Activated T-helper 1 cell treated with anti-CD3 and anti-CD28 coated beads, Interleukin-12 subunit alpha, Interleukin-12 subunit beta, Interleukin-2, Interleukin-4 antibody, amounts not matched to agents 30 ng/mL and 10 ng/mL and 1 ng/mL, durations not matched to agents 14 hours and 24 hours and 36 hours (primary cell): ENCODE measurements at regions of chr6 and their contacts with region 1.

Region 1: DNA sequence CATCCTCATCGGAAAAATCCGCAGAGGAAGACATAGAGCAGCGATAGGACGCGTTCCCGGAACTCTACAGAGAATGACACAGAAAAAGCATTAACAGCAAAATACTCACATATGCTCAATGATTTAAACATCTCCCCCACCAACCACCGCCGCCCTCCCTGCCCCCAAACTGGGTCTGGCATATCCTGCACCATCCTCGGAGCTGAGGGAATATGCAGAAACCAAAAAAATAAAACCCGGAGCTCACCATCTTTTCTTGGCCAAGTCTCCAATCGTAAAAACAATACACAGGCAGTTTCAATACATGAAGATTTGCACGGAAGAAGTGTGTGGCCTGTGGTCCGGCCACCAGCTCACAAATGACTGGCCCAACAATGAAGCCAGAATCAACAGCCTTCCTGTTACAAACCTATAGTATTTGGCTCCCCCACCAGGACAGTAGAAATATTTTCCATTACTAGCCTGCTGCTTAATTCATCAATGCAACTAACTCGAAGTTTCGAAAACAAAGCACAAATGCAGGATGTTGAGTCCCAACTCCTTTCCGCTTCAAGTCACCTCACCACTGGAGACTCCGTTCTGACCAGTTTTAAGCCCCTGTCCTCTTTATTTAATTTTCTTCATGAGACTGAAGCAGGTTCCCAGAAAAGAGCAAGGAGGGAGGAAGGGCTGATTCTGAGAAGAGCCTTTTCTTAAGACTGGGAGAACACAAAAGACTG is 103.2 kb upstream of the BEND6 start:
- DNase-seq: peak; percentile 37
- H3K4me3 Mint-ChIP-seq: peak overlapping the region; percentile 81
- H3K27ac Mint-ChIP-seq: peak overlapping the region; percentile 78
- H3K4me1 Mint-ChIP-seq: peaks cover 30% of the 10 kb centered on the region
- H3K27me3 Mint-ChIP-seq: peaks cover 24% of the 10 kb centered on the region

Region 2: DNA sequence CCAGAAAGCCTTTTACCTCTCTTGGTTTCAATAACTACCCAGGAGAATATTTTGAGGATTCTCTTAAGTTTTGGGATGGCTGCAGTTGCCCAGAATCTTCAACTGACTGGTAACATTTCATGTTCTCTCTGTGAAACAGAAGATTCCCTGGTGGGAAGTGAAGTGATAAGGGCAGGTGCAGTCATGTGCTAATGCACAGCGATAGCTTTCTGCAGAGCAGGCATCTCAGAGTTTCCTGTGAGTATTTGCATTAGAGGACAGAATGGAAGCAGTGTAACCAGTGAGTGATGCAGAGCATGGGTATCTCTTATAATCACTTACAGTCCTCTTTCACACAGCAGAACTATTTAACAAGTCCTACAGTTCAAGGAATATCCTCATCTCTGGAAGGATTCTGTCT is 1601.3 kb before region 1 on chr6:
- intact Hi-C with region 1: no loop called
- DNase-seq: no peak
- H3K4me3 Mint-ChIP-seq: no peak overlapping the region
- H3K27ac Mint-ChIP-seq: no peak overlapping the region
- H3K4me1 Mint-ChIP-seq: no peaks in the 10 kb centered on the region
- H3K27me3 Mint-ChIP-seq: no peaks in the 10 kb centered on the region

Region 3: DNA sequence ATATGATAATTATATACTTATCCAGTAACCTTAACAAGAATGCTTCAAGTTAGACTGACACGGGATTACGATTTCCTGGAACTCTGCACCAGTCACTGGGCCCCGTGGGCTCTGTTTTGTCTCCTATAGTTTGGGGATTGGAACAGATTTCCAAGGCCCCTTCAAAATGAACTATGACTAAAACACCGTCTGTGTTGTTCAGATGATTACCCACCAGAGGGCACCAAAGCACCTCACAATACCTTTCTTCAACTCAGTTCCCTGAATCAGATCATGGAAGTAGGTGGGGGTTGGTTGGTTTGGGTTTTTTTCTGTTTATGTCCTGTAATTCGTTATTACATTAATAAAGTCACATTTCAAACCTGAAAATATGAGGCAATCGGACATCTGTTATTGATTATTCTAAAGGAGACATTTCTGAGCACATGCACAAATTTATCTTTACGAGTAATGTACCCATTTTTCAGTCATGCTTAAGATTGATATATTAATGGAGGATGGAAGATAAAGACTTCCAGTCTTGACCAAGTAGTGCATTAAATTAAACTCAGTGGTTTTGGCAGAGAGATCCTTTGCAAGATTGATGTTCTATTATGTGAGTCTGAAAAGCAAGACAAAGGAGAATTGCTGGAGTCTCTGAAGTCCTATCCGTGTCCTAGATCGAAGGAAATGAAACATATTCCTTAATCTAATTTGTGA is 492.4 kb before region 1 on chr6:
- intact Hi-C with region 1: loop called (anchors 2 kb)
- DNase-seq: peak; percentile 17
- H3K4me3 Mint-ChIP-seq: no peak overlapping the region
- H3K27ac Mint-ChIP-seq: no peak overlapping the region
- H3K4me1 Mint-ChIP-seq: no peaks in the 10 kb centered on the region
- H3K27me3 Mint-ChIP-seq: peaks cover 6% of the 10 kb centered on the region

Region 4: GRCh38 chr6:56637640-56638039 is 214.1 kb before region 1 on chr6:
- intact Hi-C with region 1: loop called (anchors 1 kb)
- DNase-seq: no peak
- H3K4me3 Mint-ChIP-seq: no peak overlapping the region
- H3K27ac Mint-ChIP-seq: no peak overlapping the region
- H3K4me1 Mint-ChIP-seq: no peaks in the 10 kb centered on the region
- H3K27me3 Mint-ChIP-seq: no peaks in the 10 kb centered on the region

Region 5: DNA sequence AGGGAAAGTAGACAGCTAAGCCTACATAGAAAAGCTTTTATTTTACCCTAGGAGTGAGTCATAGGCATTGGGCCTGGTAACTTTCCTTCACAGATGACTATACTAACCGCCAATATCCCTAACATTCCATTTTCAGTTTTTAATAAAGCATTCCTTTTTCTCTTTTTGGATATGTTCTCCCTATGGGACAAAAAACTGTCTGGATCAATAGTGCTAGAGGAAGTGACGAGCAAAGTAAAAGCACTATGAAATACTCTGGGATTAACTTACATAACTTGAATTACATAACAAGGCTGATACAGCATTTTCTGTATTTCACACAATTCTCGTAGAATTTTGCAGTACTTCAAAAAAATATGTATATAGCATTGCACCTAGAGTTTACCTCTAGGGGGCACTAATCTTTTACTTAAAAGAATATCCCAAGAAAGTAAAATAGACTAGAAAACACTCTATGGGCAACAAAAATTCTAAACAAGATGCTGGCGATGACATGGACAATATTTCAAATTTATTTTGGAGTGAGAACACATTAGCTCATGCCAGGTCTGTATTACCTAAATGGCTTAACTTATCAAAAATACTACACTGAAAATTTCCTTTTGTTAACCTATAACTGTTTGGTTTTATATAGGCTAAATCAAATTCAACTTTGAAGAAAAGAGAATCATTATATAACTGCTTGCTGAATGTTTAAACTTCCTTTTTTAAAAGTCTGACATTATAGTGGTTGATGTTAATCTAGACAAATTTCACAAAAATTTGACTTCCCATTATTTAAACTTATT is 142.7 kb before region 1 on chr6:
- intact Hi-C with region 1: loop called (anchors 1 kb)
- DNase-seq: no peak
- H3K4me3 Mint-ChIP-seq: no peak overlapping the region
- H3K27ac Mint-ChIP-seq: no peak overlapping the region
- H3K4me1 Mint-ChIP-seq: no peaks in the 10 kb centered on the region
- H3K27me3 Mint-ChIP-seq: no peaks in the 10 kb centered on the region

Region 6: GRCh38 chr6:56749632-56750151 is 102.0 kb before region 1 on chr6:
- intact Hi-C with region 1: loop called (anchors 5 kb)
- DNase-seq: no peak
- H3K4me3 Mint-ChIP-seq: no peak overlapping the region
- H3K27ac Mint-ChIP-seq: peak overlapping the region; percentile 43
- H3K4me1 Mint-ChIP-seq: peaks cover 10% of the 10 kb centered on the region
- H3K27me3 Mint-ChIP-seq: peaks cover 8% of the 10 kb centered on the region

Region 7: DNA sequence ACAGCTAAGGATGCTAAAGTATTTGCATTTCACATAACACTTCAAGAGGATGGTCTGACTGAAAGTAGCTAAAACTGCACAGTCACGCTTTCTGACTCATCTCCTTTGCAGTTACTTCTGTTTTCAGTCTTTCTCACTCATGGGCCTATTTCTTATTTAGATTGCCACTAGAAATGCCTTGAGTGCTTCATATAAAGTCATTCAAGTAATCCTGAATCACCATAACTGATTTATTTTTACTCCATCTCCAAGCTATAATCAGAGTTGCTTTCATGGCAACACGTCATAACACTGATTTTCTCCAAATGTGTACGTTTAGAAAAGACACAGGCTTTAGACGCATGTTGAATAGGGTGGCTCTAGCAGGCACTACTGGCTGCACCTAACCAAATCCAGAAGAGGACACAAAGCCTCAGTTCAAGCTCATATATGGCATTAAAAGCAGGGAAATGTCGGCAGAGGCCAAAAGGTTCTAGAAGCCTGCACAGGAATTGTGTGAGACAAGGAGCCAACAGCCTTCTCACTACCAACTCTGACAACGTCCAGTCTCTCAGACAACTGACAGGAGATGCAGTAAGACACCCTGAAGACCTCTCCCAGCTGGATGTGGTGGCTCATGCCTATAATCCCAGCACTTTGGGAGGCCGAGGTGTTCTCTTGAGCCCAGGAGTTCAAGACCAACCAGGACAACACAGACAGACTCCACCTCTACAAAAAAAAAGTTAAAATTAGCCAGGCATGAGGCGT is 39.2 kb after region 1 on chr6:
- intact Hi-C with region 1: loop called (anchors 2 kb)
- DNase-seq: peak; percentile 5
- H3K4me3 Mint-ChIP-seq: no peak overlapping the region
- H3K27ac Mint-ChIP-seq: peak overlapping the region; percentile 53
- H3K4me1 Mint-ChIP-seq: peaks cover 35% of the 10 kb centered on the region
- H3K27me3 Mint-ChIP-seq: no peaks in the 10 kb centered on the region

Region 8: GRCh38 chr6:56995347-56995902 is 143.7 kb after region 1 on chr6:
- intact Hi-C with region 1: no loop called
- DNase-seq: no peak
- H3K4me3 Mint-ChIP-seq: no peak overlapping the region
- H3K27ac Mint-ChIP-seq: no peak overlapping the region
- H3K4me1 Mint-ChIP-seq: no peaks in the 10 kb centered on the region
- H3K27me3 Mint-ChIP-seq: peaks cover 13% of the 10 kb centered on the region

Region 9: DNA sequence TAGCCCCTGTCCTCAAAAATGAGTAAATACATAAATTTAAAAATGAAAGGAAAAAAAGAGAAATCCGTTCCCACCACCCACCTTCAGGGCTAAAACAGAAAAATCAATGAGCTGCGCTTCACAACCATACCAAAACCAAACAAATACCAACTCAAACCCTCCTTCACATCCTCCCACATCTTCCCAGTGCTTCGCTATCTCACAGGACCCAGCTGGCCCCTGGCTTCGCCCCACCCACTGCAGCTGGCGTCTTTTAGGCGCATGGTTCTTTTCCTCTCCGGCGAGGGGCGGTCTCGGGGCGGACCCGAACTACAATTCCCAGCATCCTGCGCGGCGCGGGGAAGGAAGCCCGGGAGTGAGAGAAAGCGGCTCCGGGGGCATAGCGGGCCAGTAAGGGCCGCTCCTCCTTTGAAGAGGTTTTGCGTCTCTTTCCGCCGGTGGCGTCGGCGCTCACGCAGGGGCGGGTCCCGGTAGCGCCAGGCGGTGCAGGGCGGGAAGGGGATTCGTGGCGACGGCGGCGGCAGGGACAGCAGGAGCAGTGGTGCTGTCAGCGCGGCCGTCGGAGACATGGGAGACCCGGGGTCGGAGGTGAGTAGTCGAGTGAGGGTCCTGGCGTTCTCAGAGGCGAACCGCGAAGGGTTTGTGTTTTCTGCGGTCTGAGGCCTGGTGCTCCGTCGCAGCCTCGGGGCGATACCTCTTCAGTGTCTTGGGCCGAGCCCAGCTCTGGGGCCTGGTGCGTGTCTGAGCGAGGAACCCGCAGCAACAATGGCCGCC is 238.2 kb after region 1 on chr6 and contains the start of gene ZNF451:
- intact Hi-C with region 1: loop called (anchors 5 kb)
- DNase-seq: peak; percentile 95
- H3K4me3 Mint-ChIP-seq: peak within 1 kb of the TSS; percentile 88
- H3K27ac Mint-ChIP-seq: peak within 1 kb of the TSS; percentile 72
- H3K4me1 Mint-ChIP-seq: peaks cover 35% of the 10 kb centered on the region
- H3K27me3 Mint-ChIP-seq: no peaks in the 10 kb centered on the region
- total RNA-seq, gene ZNF451: 58.1 and 64.4 TPM in 2 replicates